IMR-90 (cell line): ENCODE measurements at regions of chr13 and their contacts with region 1.

Region 1: GRCh38 chr13:36030670-36031331 is 100.4 kb downstream of the DCLK1 start:
- DNase-seq: peak; percentile 18
- ATAC-seq: no peak
- H3K4me3 ChIP-seq: no peak overlapping the region
- H3K27ac ChIP-seq: no peak overlapping the region
- H3K4me1 ChIP-seq: no peaks in the 10 kb centered on the region
- H3K27me3 ChIP-seq: no peaks in the 10 kb centered on the region
- CTCF ChIP-seq: no peak
- POLR2A ChIP-seq: no peak
- RAD21 ChIP-seq: no peak

Region 2: GRCh38 chr13:36096461-36097416 is 65.9 kb after region 1 on chr13:
- CTCF ChIA-PET with region 1: no interaction called
- POLR2A ChIA-PET with region 1: no interaction called
- dilution Hi-C with region 1: no loop called
- in situ Hi-C with region 1: loop called (anchors 10 kb)
- intact Hi-C with region 1: no loop called
- DNase-seq: no peak
- ATAC-seq: no peak
- H3K4me3 ChIP-seq: no peak overlapping the region
- H3K27ac ChIP-seq: no peak overlapping the region
- H3K4me1 ChIP-seq: no peaks in the 10 kb centered on the region
- H3K27me3 ChIP-seq: no peaks in the 10 kb centered on the region
- CTCF ChIP-seq: no peak
- POLR2A ChIP-seq: no peak
- RAD21 ChIP-seq: no peak

Region 3: GRCh38 chr13:37058910-37059847 is 1028.4 kb after region 1 on chr13 and contains the start of gene SUPT20H:
- CTCF ChIA-PET with region 1: no interaction called
- POLR2A ChIA-PET with region 1: no interaction called
- dilution Hi-C with region 1: no loop called
- in situ Hi-C with region 1: no loop called
- intact Hi-C with region 1: no loop called
- DNase-seq: peak; percentile 88
- ATAC-seq: peak; percentile 97
- H3K4me3 ChIP-seq: peak within 1 kb of the TSS; percentile 98
- H3K27ac ChIP-seq: peak within 1 kb of the TSS; percentile 93
- H3K4me1 ChIP-seq: no peaks in the 10 kb centered on the region; the same call in 1 of the 2 replicates
- H3K27me3 ChIP-seq: peaks cover 2% of the 10 kb centered on the region; the same call in 1 of the 2 replicates
- CTCF ChIP-seq: no peak
- POLR2A ChIP-seq: peak; percentile 85
- RAD21 ChIP-seq: no peak
- total RNA-seq, gene SUPT20H: 44.4 and 46.6 TPM in 2 replicates